ENCODE measurements at regions of chr2 and their contacts with region 1.

Region 1: DNA sequence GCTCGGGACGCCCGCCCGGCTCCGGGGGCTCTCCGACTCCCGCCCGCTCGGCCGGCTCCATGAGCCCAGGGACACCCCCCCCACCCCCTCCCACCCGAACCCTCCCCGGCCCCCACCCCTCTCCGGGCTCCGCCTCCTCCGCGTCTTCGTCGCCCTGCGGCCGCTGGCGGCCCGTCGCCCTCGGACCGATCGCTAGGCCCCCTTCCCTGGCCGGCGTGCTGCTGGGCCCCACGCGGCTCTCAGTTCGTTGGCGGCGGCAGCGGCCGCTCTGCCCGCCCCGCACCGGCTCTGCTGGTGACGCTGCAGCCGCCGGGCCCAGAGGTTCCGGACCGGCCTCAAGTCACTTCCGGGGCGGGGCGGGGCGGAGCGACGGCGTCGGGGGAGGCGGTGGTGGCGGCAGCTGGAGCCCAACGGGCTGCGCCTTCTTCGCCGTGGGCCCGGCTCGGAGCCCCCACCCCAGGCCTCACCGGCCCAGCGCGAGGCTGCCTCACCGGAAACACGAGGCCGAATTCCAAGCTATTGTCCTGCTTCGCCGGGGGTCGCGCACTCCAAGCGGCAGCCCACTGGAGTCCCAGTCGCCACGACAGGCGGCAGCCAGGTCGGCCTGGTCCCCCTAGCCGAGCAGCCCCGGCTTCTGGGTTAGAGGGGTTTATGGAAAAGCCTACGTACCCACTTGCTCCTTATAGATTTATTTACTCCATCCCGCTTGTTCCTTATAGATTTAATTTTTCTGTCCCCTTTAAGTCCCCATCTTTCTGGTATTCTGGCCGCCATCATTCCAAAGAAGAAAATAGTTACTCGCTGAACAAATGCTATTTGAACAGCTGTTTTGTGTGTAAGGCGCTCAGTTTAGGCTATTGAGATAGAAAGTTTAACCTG is at the start of gene PSME4:
- DNase-seq: peak; percentile 88
- H3K4me3 Mint-ChIP-seq: peak within 1 kb of the TSS; percentile 87
- H3K27ac Mint-ChIP-seq: peak within 1 kb of the TSS; percentile 94
- H3K4me1 Mint-ChIP-seq: peaks cover 33% of the 10 kb centered on the region
- H3K27me3 Mint-ChIP-seq: no peaks in the 10 kb centered on the region
- CTCF ChIP-seq: no peak
- total RNA-seq, gene PSME4: 54.8 and 65.2 TPM in 2 replicates

Region 2: GRCh38 chr2:53913721-53914120 is 57.2 kb before region 1 on chr2:
- CTCF ChIA-PET with region 1: interaction called, 3 read pairs
- POLR2A ChIA-PET with region 1: interaction called, 19 read pairs
- intact Hi-C with region 1: no loop called
- DNase-seq: peak; percentile 33
- H3K4me3 Mint-ChIP-seq: no peak overlapping the region
- H3K27ac Mint-ChIP-seq: no peak overlapping the region
- H3K4me1 Mint-ChIP-seq: no peaks in the 10 kb centered on the region
- H3K27me3 Mint-ChIP-seq: no peaks in the 10 kb centered on the region
- CTCF ChIP-seq: no peak

Region 3: GRCh38 chr2:53960476-53960875 is 10.5 kb before region 1 on chr2:
- CTCF ChIA-PET with region 1: interaction called, 3 read pairs
- POLR2A ChIA-PET with region 1: interaction called, 42 read pairs
- intact Hi-C with region 1: no loop called
- DNase-seq: no peak
- H3K4me3 Mint-ChIP-seq: no peak overlapping the region
- H3K27ac Mint-ChIP-seq: peak overlapping the region; percentile 85
- H3K4me1 Mint-ChIP-seq: peaks cover 30% of the 10 kb centered on the region
- H3K27me3 Mint-ChIP-seq: no peaks in the 10 kb centered on the region
- CTCF ChIP-seq: no peak

Region 4: DNA sequence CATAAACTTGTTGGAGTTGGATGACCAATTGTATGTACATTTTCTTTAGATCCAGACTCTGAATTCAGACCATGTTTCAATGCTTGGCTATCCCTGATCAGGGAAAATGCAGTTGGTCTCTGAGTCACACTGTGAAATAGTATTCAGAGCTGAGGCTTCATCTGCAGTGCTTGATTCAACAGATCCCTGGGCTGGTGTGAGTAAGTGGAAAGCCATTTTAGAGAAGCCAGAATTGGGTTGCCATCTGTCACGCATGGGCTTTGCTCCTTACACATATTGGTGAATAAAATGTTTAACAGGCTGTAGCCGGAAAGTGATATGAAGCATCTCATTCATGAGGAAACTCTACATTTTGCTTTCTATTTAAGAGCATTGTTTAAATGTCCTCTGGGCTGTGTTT is 94.4 kb after region 1 on chr2:
- CTCF ChIA-PET with region 1: interaction called, 5 read pairs
- POLR2A ChIA-PET with region 1: interaction called, 12 read pairs
- intact Hi-C with region 1: loop called (anchors 10 kb)
- DNase-seq: peak; percentile 47
- H3K4me3 Mint-ChIP-seq: no peak overlapping the region
- H3K27ac Mint-ChIP-seq: peak overlapping the region; percentile 27
- H3K4me1 Mint-ChIP-seq: peaks cover 39% of the 10 kb centered on the region
- H3K27me3 Mint-ChIP-seq: no peaks in the 10 kb centered on the region
- CTCF ChIP-seq: no peak

Region 5: GRCh38 chr2:54115284-54116137 is 144.5 kb after region 1 on chr2 and contains the start of gene ACYP2:
- CTCF ChIA-PET with region 1: interaction called, 6 read pairs
- POLR2A ChIA-PET with region 1: interaction called, 26 read pairs
- intact Hi-C with region 1: no loop called
- DNase-seq: peak; percentile 94
- H3K4me3 Mint-ChIP-seq: peak within 1 kb of the TSS; percentile 88
- H3K27ac Mint-ChIP-seq: peak within 1 kb of the TSS; percentile 100
- H3K4me1 Mint-ChIP-seq: peaks cover 5% of the 10 kb centered on the region
- H3K27me3 Mint-ChIP-seq: no peaks in the 10 kb centered on the region
- CTCF ChIP-seq: no peak
- total RNA-seq, gene ACYP2: 14.3 and 17.8 TPM in 2 replicates